ENCODE measurements at regions of chr4 and their contacts with region 1.

Region 1: GRCh38 chr4:17168571-17168970 is 270.1 kb upstream of the LDB2 start:
- DNase-seq: no peak
- ATAC-seq: peak; percentile 69
- H3K4me3 ChIP-seq: no peak overlapping the region
- H3K27ac ChIP-seq: no peak overlapping the region
- H3K4me1 ChIP-seq: peaks cover 6 to 18% of the 10 kb centered on the region in 2 donors
- H3K27me3 ChIP-seq: no peaks in the 10 kb centered on the region

Region 2: DNA sequence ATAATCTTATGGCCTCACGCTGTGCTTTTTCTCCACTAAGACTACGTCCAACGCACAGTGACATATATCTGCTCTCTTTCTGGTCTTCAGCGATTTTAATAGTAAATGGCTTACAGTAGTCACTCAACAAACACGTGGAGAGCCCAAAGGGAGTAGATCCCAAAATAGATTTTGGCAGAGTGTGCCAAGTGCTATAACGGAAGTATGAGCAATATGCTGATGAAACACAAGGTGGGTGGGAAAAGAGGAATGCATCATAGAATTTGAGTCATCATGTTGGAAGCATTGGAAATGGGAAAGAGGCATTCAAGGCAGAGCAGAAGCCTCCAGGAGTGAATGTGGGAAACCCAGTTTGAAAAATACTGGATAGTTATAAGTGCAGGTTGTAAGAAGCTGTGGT is 141.1 kb before region 1 on chr4:
- intact Hi-C with region 1: loop called in 1 of 2 experiments (anchors 5 kb)
- DNase-seq: no peak
- ATAC-seq: no peak
- H3K4me3 ChIP-seq: no peak overlapping the region
- H3K27ac ChIP-seq: no peak overlapping the region
- H3K4me1 ChIP-seq: peaks cover 0 to 2% of the 10 kb centered on the region in 2 donors
- H3K27me3 ChIP-seq: peaks cover 0 to 2% of the 10 kb centered on the region in 2 donors

Region 3: DNA sequence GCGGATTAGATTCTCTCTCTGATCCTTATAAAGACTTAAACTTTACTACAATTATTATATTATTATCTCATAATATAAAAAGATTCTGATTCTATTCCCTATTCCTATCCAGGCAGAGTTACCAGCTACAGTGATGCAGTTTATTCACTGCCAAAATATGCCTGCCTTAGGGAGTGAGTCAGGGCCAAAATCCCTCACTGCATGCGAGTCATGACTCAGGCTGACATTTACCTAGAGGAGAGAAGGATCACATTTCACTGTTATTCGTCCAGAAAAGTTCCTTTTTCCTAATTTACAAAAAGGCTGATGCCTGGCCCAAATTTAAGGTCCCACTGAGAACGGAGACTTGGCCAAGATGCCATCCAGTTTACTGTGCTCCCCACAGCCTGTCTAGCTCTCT is 101.6 kb before region 1 on chr4:
- intact Hi-C with region 1: loop called in 1 of 2 experiments (anchors 10 kb)
- DNase-seq: peak in 1 of 2 donors; percentile 47
- ATAC-seq: peak; percentile 71
- H3K4me3 ChIP-seq: no peak overlapping the region
- H3K27ac ChIP-seq: peak overlapping the region in 1 of 2 donors; percentile 6
- H3K4me1 ChIP-seq: peaks cover 0 to 6% of the 10 kb centered on the region in 2 donors
- H3K27me3 ChIP-seq: no peaks in the 10 kb centered on the region

Region 4: DNA sequence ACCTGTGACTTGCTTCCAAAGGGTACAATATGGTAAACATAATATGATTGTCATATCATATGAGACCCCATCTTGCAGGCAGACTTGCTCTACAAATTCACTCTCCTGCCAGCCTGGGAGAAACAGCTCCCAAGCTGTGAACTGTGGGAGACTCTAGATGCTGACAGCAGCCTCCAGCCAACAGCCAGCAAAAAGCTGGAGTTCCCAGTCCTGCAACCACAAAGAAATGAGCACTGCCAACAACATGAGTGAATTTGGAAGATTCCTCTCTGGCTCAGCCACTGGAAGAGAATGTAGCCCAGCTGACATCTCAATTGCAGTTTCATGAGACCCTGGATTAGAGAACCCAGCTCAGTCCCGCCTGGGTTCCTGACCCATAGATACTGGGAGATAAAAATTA is 197.9 kb after region 1 on chr4:
- intact Hi-C with region 1: no loop called
- DNase-seq: peak in 1 of 2 donors; percentile 48
- ATAC-seq: no peak
- H3K4me3 ChIP-seq: no peak overlapping the region
- H3K27ac ChIP-seq: no peak overlapping the region
- H3K4me1 ChIP-seq: no peaks in the 10 kb centered on the region
- H3K27me3 ChIP-seq: no peaks in the 10 kb centered on the region